ENCODE measurements at regions of chr6 and their contacts with region 1.

Region 1: DNA sequence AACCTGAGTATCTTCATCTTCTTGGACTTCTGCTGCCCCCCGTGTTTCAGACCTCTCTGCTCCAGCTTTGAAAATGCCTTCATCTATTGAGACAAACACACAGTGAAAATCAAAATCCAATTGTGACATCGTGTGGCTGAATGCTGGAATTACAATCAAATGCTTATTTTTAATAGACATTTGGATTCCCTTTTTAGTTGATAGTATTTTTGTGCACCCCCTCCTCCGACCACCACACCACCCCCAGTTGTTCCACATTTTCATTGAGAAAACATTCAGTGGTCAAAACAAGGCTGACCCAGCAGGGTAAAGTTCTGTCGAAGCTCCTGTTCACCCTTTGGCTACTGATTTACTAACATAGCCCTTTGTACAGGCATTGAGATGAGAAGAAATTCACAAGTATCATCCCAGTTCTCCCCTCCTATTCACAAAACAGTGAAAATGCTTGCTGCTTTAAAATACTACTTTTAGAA is 79.0 kb downstream of the NRSN1 start:
- DNase-seq: no peak
- ATAC-seq: no peak
- H3K4me3 ChIP-seq: no peak overlapping the region
- H3K27ac ChIP-seq: no peak overlapping the region
- H3K4me1 ChIP-seq: no peaks in the 10 kb centered on the region
- H3K27me3 ChIP-seq: no peaks in the 10 kb centered on the region

Region 2: GRCh38 chr6:24064082-24064481 is 141.0 kb before region 1 on chr6:
- intact Hi-C with region 1: loop called in 1 of 2 experiments (anchors 5 kb)
- DNase-seq: no peak
- ATAC-seq: no peak
- H3K4me3 ChIP-seq: no peak overlapping the region
- H3K27ac ChIP-seq: no peak overlapping the region
- H3K4me1 ChIP-seq: peaks cover 0 to 3% of the 10 kb centered on the region in 2 donors
- H3K27me3 ChIP-seq: no peaks in the 10 kb centered on the region

Region 3: GRCh38 chr6:24126586-24127192 is 78.4 kb before region 1 on chr6:
- intact Hi-C with region 1: no loop called
- DNase-seq: peak in 1 of 2 donors; percentile 51
- ATAC-seq: no peak
- H3K4me3 ChIP-seq: no peak overlapping the region
- H3K27ac ChIP-seq: no peak overlapping the region
- H3K4me1 ChIP-seq: no peaks in the 10 kb centered on the region
- H3K27me3 ChIP-seq: no peaks in the 10 kb centered on the region

Region 4: GRCh38 chr6:24272553-24272952 is 67.5 kb after region 1 on chr6:
- intact Hi-C with region 1: no loop called
- DNase-seq: no peak
- ATAC-seq: no peak
- H3K4me3 ChIP-seq: no peak overlapping the region
- H3K27ac ChIP-seq: no peak overlapping the region
- H3K4me1 ChIP-seq: no peaks in the 10 kb centered on the region
- H3K27me3 ChIP-seq: no peaks in the 10 kb centered on the region

Measured in aorta (tissue), 5 donors.